Activated naive CD4-positive, alpha-beta T cell treated with anti-CD3 and anti-CD28 coated beads, Interleukin-2, amount 10 ng/mL, durations not matched to agents 7 days and 5 days (primary cell): ENCODE measurements at regions of chr17 and their contacts with region 1.

Region 1: DNA sequence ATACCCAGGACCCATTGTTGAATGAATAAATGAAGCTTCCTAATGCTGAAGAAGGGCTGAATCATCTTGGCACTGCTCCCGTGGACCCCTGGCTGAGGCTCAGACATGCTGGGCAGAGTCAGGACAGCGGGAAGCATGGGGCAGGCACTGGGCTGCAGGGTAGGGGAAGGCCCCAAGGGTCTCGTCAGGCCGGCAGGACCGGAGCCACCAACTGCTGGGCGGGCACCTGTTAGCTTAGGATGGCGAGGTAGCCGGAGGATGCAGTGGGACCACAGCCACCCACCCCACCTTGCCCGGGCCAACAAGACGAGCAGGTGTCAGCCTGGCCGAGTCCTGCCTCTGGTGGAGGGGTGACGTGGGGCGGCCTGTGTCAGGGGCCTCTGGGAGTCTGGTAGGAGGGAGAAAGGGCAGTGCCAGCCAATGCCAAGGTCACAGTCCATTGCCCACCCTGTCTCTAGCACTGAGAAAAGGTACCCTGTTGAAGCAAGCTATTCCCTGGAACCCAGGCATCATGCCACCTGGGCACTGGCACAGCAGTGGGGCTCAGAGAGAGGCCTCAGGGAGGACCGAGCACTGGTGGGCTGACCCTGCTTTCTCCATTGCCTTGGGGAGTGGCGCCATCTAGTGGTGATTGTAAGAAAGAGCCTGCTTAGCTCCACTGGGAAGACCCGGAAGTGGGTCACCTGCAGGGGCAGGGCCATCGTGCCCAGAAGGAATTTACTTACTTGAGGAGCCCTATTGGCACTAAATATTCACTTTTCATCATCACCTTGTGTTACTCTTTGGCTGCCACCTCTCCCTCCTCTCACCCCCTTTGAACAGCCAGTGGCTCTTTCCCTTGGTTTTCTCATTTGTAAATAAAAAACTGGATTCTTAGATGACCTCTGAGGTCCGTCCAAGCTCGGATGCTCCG is 3.0 kb upstream of the DLX3 start:
- DNase-seq: peak; percentile 90
- H3K4me3 Mint-ChIP-seq: no peak overlapping the region
- H3K27ac Mint-ChIP-seq: no peak overlapping the region
- H3K4me1 Mint-ChIP-seq: peaks cover 27% of the 10 kb centered on the region
- H3K27me3 Mint-ChIP-seq: peaks cover 96% of the 10 kb centered on the region

Region 2: DNA sequence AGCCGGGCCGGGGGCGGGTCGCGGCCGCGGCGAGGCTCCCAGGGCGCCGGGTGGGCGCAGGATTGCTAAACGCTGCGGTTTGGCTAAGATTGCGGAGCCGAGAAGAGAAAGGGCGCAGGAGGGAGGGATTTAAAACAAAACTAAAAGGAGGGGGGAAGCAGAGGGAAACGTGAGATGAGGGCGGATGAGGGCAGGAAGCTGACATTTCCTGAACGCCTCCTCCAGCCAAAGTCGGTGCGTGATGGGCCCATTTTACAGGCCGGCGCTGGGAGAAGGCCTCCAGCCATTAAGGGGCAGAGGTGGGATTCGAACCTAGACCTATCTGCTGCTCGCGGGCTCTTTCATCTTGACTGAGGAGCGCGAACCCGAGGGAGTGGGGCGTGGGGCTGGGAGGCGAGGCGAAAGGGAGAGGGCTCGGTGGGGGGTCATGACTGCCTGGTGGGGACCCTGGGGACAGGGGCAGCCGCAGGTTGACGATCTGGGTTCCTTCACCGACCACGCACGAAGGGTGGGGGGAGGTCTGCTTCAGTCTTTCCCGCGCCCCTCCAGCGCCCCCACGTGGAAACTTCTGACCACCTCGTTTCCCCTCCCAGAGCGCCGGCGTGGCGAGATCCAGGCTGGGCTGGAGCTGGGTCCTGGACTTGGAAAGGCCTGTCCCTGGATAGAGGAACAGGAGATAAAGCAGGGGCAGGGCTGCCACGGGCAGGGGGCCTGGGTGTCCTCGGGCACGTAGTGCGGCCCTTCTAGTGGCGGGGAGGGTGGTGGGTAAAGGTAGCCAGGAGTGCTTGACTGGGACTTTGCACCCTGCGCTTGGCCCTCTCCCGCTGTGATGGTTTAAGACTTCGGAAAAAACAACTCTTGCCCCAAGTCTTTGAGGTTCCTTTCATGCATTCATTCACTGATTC is 146.4 kb before region 1 on chr17:
- CTCF ChIA-PET with region 1: interaction called, 46 read pairs
- DNase-seq: peak; percentile 77
- H3K4me3 Mint-ChIP-seq: peak overlapping the region; percentile 88
- H3K27ac Mint-ChIP-seq: peak overlapping the region; percentile 81
- H3K4me1 Mint-ChIP-seq: peaks cover 19% of the 10 kb centered on the region
- H3K27me3 Mint-ChIP-seq: peaks cover 51% of the 10 kb centered on the region

Region 3: DNA sequence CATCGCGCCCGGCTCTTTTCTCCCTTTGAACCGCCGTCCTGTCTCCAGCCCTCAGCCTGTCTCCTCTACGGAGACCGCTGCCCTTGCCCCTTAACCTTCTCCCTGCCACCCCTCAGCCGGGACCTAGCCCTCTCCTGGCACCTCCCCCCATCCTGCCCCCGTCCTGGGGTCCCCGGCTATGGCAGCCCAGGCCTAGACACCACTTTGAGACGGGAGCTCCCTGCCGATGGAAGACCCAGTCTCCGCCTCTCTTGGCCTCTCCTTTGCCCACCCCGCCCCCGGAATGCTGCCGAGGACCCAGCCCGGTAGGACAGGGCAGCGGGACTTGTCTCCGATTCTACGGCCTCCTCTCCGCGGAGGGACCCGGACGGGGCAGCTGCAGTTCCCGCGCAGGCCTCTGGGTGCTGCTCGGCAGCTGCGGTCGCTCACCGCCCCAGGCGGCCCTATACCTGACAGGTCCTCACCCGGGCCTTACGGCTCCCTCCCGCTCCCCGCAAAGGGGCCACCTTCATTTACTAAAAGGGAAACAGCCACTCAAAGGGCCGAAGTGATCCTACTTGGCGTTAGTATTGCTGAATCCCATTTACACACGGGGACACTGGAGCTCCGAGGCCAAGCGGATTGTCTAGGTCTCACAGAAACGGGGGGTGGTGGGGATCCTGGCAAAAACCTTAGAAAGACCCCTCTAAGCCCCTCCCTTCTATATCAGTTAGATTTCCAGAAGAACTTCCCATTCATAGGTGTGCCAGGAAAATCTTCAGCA is 117.6 kb before region 1 on chr17:
- CTCF ChIA-PET with region 1: interaction called, 50 read pairs
- DNase-seq: peak; percentile 82
- H3K4me3 Mint-ChIP-seq: no peak overlapping the region
- H3K27ac Mint-ChIP-seq: no peak overlapping the region
- H3K4me1 Mint-ChIP-seq: peaks cover 6% of the 10 kb centered on the region
- H3K27me3 Mint-ChIP-seq: peaks cover 77% of the 10 kb centered on the region

Region 4: DNA sequence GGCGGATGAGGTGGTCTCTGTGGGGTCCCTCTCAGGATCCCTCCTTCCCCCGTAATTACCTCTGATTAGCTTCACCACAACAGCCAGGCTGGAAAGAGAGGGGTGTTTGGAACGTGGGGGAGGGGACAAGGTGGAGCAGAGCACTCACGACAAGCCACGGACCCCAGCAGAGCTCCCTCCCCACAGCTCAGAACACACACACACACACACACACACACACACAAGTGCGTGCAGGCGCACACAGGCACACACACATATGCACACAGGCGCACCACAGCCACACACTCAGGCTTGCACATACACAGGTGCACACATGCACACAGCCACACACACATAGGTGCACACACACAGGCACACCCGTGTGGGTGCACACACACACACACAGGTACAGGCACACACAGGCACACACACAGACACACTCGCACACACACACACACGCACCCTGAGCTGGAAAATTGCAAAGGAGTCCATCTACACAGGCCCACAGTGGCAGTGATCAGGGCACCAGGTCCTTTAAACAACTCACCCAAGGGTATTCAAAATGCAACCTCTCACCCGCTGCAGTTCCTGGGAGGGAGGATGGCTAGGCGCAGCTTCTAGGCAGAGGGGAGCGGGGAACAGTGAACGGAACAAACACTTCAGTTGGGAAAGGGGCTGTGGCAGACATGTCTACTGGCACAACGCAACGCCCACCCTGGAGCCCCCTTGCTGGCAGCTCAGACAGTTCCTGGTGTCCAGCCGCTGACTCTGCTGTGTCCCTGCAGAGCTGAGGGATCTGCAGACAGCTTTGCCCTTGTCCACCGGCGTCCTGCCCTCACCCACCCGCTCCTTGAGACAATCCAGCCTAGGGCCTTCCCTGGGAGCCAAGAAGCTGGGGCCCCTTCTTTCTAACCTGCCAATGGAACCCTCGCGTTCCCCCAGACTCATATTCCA is 89.0 kb before region 1 on chr17:
- CTCF ChIA-PET with region 1: interaction called, 17 read pairs
- DNase-seq: no peak
- H3K4me3 Mint-ChIP-seq: no peak overlapping the region
- H3K27ac Mint-ChIP-seq: no peak overlapping the region
- H3K4me1 Mint-ChIP-seq: peaks cover 7% of the 10 kb centered on the region
- H3K27me3 Mint-ChIP-seq: peaks cover 99% of the 10 kb centered on the region

Region 5: GRCh38 chr17:49952209-49952911 is 45.7 kb before region 1 on chr17:
- CTCF ChIA-PET with region 1: interaction called, 118 read pairs
- DNase-seq: peak; percentile 91
- H3K4me3 Mint-ChIP-seq: no peak overlapping the region
- H3K27ac Mint-ChIP-seq: no peak overlapping the region
- H3K4me1 Mint-ChIP-seq: no peaks in the 10 kb centered on the region
- H3K27me3 Mint-ChIP-seq: peaks cover 82% of the 10 kb centered on the region

Region 6: GRCh38 chr17:49987290-49987585 is 10.8 kb before region 1 on chr17:
- CTCF ChIA-PET with region 1: interaction called, 15 read pairs
- DNase-seq: no peak
- H3K4me3 Mint-ChIP-seq: no peak overlapping the region
- H3K27ac Mint-ChIP-seq: no peak overlapping the region
- H3K4me1 Mint-ChIP-seq: peaks cover 4% of the 10 kb centered on the region
- H3K27me3 Mint-ChIP-seq: peaks cover 88% of the 10 kb centered on the region

Region 7: DNA sequence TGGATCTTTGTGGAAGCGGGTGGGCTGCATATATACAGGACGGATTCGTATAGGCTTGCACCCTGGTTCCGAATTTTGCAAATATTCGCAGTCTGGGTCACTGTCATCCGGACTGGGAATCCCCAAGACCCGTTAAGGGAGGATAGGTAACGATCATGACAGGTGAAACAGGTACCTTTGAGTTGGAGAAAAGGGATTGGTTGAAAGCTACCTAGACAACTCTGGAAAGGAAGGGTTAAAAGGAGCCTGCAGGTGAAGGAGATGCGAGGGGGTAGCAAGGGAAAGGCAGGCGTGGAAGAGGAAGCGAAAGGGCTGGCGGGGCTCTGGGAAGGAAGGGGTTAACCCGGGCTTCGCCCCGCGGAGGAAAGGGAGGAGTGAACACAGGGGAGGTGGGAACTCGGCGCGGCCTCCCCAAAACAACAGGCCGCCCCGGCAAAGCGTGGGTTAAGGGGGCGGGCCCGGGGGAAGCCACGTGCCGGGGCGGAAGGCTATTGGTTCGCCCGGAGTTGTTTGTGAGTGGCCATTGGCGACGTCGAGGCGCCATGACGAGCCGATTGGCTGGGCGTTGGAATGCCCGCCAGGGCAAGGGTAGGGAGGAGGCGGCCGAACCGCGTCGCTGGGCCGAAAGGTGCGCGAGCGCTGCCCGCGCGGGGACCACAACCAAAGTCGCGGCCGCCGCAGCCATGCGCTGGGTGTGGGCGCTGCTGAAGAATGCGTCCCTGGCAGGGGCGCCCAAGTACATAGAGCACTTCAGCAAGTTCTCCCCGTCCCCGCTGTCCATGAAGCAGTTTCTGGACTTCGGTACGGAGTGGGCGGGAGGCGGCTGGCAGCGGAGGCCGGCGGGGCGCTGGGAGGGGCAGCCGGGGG is 96.9 kb after region 1 on chr17 and contains the start of gene PDK2:
- CTCF ChIA-PET with region 1: interaction called, 12 read pairs
- DNase-seq: peak; percentile 97
- H3K4me3 Mint-ChIP-seq: peak within 1 kb of the TSS; percentile 97
- H3K27ac Mint-ChIP-seq: peak within 1 kb of the TSS; percentile 94
- H3K4me1 Mint-ChIP-seq: peaks cover 34% of the 10 kb centered on the region
- H3K27me3 Mint-ChIP-seq: peaks cover 5% of the 10 kb centered on the region